ENCODE measurements at regions of chr20 and their contacts with region 1.

Region 1: DNA sequence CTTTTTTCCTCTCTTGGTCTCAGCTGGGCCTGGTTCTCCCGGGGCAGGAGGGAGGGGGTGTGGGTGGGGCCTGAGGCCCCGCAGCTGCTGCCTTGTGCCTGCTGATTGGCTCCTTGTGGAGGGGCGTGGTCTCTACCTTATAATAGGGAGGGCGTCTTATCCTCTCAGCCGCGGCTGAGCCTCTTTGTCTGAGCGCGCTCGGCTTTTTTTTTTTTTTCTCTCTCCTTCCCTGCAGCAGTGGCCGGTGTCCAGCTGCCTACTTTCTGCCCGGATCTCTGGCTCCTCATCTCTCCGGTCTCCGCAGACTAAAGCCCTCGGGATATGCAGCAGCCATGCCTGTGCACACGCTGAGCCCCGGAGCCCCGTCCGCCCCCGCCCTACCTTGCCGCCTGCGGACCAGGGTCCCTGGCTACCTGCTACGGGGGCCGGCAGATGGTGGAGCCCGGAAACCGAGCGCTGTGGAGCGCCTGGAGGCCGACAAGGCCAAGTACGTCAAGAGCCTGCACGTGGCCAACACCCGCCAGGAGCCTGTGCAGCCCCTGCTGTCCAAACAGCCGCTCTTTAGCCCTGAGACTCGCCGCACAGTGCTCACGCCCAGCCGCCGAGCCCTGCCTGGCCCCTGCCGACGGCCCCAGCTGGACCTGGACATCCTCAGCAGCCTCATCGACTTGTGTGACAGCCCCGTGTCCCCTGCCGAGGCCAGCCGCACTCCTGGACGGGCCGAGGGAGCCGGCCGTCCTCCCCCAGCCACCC is 11.1 kb downstream of the FAM110A start:
- DNase-seq: peak; percentile 91
- H3K4me3 Mint-ChIP-seq: peak overlapping the region; percentile 89
- H3K27ac Mint-ChIP-seq: peak overlapping the region; percentile 69
- H3K4me1 Mint-ChIP-seq: peaks cover 54% of the 10 kb centered on the region
- H3K27me3 Mint-ChIP-seq: no peaks in the 10 kb centered on the region

Region 2: GRCh38 chr20:859751-860231 is 15.1 kb after region 1 on chr20:
- CTCF ChIA-PET with region 1: interaction called, 4 read pairs
- POLR2A ChIA-PET with region 1: interaction called, 11 read pairs
- DNase-seq: no peak
- H3K4me3 Mint-ChIP-seq: no peak overlapping the region
- H3K27ac Mint-ChIP-seq: peak overlapping the region; percentile 74
- H3K4me1 Mint-ChIP-seq: peaks cover 66% of the 10 kb centered on the region
- H3K27me3 Mint-ChIP-seq: no peaks in the 10 kb centered on the region

Region 3: DNA sequence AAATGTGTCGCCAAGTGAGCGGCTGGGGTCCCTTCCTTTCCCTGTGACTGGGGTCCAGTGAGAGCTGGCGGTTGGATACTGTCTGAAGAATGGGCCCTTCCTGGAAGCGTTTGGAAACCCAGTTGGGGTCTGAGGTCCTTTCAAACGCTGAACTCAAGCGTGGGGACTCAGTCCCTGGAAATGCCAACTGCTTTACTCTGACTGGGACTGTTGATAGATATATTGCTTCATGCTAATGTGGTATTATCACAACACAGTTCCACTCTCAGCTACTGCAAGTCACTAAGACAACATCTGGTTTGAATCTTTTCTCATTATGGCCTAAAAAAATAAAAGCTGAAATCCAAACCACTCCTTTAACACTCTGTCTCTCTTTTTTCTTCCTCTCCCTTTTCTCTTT is 250.1 kb after region 1 on chr20:
- CTCF ChIA-PET with region 1: no interaction called
- POLR2A ChIA-PET with region 1: no interaction called
- DNase-seq: no peak
- H3K4me3 Mint-ChIP-seq: no peak overlapping the region
- H3K27ac Mint-ChIP-seq: no peak overlapping the region
- H3K4me1 Mint-ChIP-seq: no peaks in the 10 kb centered on the region
- H3K27me3 Mint-ChIP-seq: no peaks in the 10 kb centered on the region